ENCODE measurements at regions of chr3 and their contacts with region 1.

Region 1: DNA sequence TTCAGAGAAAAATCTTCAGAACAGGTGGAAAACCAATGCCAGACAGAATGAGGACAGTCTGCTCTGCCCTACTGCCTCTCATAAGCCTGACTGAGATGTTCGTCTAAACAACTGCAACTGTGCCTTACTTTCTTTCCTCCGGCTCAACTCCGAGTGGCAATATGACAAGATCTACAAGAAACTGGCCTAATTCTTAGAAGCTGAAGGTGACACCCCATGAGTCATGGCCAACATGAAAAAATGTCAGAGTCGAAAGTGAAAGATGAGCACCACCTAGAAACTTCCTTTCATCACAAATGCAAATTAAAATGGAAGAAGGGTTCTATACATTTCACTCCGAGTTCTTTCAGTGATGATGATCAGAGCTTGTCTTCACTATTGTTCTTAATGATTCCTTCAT is 12.9 kb downstream of the PCYT1A start:
- DNase-seq: peak; percentile 78
- H3K4me3 Mint-ChIP-seq: peak overlapping the region; percentile 79
- H3K27ac Mint-ChIP-seq: peak overlapping the region; percentile 98
- H3K4me1 Mint-ChIP-seq: peaks cover 60% of the 10 kb centered on the region
- H3K27me3 Mint-ChIP-seq: no peaks in the 10 kb centered on the region

Region 2: GRCh38 chr3:196081791-196082618 is 192.6 kb before region 1 on chr3 and contains the start of gene TFRC:
- intact Hi-C with region 1: loop called (anchors 1 kb)
- DNase-seq: peak; percentile 95
- H3K4me3 Mint-ChIP-seq: peak within 1 kb of the TSS; percentile 100
- H3K27ac Mint-ChIP-seq: peak within 1 kb of the TSS; percentile 98
- H3K4me1 Mint-ChIP-seq: peaks cover 38% of the 10 kb centered on the region
- H3K27me3 Mint-ChIP-seq: no peaks in the 10 kb centered on the region
- total RNA-seq, gene TFRC: 791 TPM in 2 replicates

Region 3: GRCh38 chr3:196287440-196288148 is 13.0 kb after region 1 on chr3 and contains the start of gene PCYT1A:
- intact Hi-C with region 1: loop called (anchors 1 kb)
- DNase-seq: peak; percentile 72
- H3K4me3 Mint-ChIP-seq: peak within 1 kb of the TSS; percentile 99
- H3K27ac Mint-ChIP-seq: peak within 1 kb of the TSS; percentile 95
- H3K4me1 Mint-ChIP-seq: peaks cover 44% of the 10 kb centered on the region
- H3K27me3 Mint-ChIP-seq: no peaks in the 10 kb centered on the region
- total RNA-seq, gene PCYT1A: 54.7 and 57.0 TPM in 2 replicates

Region 4: GRCh38 chr3:196317687-196318467 is 43.3 kb after region 1 on chr3 and contains the start of gene DYNLT2B:
- intact Hi-C with region 1: loop called (anchors 1 kb)
- DNase-seq: peak; percentile 87
- H3K4me3 Mint-ChIP-seq: peak within 1 kb of the TSS; percentile 95
- H3K27ac Mint-ChIP-seq: peak within 1 kb of the TSS; percentile 98
- H3K4me1 Mint-ChIP-seq: peaks cover 7% of the 10 kb centered on the region
- H3K27me3 Mint-ChIP-seq: no peaks in the 10 kb centered on the region
- total RNA-seq, gene DYNLT2B: 11.6 and 12.7 TPM in 2 replicates

Region 5: GRCh38 chr3:196414469-196414868 is 139.9 kb after region 1 on chr3:
- intact Hi-C with region 1: loop called (anchors 1 kb)
- DNase-seq: no peak
- H3K4me3 Mint-ChIP-seq: peak overlapping the region; percentile 23
- H3K27ac Mint-ChIP-seq: peak overlapping the region; percentile 82
- H3K4me1 Mint-ChIP-seq: peaks cover 34% of the 10 kb centered on the region
- H3K27me3 Mint-ChIP-seq: no peaks in the 10 kb centered on the region